ENCODE measurements at regions of chr15 and their contacts with region 1.

Region 1: GRCh38 chr15:98428253-98428989 is 219.9 kb upstream of the IGF1R start:
- DNase-seq: peak; percentile 70
- H3K4me3 ChIP-seq: peak overlapping the region; percentile 40
- H3K27ac ChIP-seq: no peak overlapping the region
- H3K4me1 ChIP-seq: no peaks in the 10 kb centered on the region
- H3K27me3 ChIP-seq: peaks cover 22% of the 10 kb centered on the region
- CTCF ChIP-seq: peak; percentile 80

Region 2: GRCh38 chr15:98311566-98312188 is 116.7 kb before region 1 on chr15:
- CTCF ChIA-PET with region 1: interaction called, 17 read pairs
- POLR2A ChIA-PET with region 1: no interaction called
- intact Hi-C with region 1: loop called (anchors 2 kb)
- DNase-seq: peak; percentile 83
- H3K4me3 ChIP-seq: no peak overlapping the region
- H3K27ac ChIP-seq: no peak overlapping the region
- H3K4me1 ChIP-seq: no peaks in the 10 kb centered on the region
- H3K27me3 ChIP-seq: peaks cover 5% of the 10 kb centered on the region
- CTCF ChIP-seq: peak; percentile 87

Measured in A673 (cell line).